ENCODE measurements at regions of chr5 and their contacts with region 1.

Region 1: GRCh38 chr5:6632917-6633468 is at the starts of genes NSUN2 and SRD5A1:
- DNase-seq: peak; percentile 97
- ATAC-seq: peak; percentile 88
- H3K4me3 Mint-ChIP-seq: peak within 1 kb of the TSS; percentile 92
- H3K27ac Mint-ChIP-seq: peak within 1 kb of the TSS; percentile 99
- H3K4me1 Mint-ChIP-seq: peaks cover 44% of the 10 kb centered on the region
- H3K27me3 Mint-ChIP-seq: no peaks in the 10 kb centered on the region
- CTCF ChIP-seq: no peak
- total RNA-seq, gene NSUN2: 86.4 and 93.3 TPM in 2 replicates
- total RNA-seq, gene SRD5A1: 11.5 and 14.8 TPM in 2 replicates

Region 2: GRCh38 chr5:5523066-5523505 is 1109.9 kb before region 1 on chr5:
- CTCF ChIA-PET with region 1: no interaction called
- POLR2A ChIA-PET with region 1: no interaction called
- intact Hi-C with region 1: loop called (anchors 1 kb)
- DNase-seq: no peak
- ATAC-seq: peak; percentile 60
- H3K4me3 Mint-ChIP-seq: peak overlapping the region; percentile 32
- H3K27ac Mint-ChIP-seq: peak overlapping the region; percentile 10
- H3K4me1 Mint-ChIP-seq: peaks cover 12% of the 10 kb centered on the region
- H3K27me3 Mint-ChIP-seq: no peaks in the 10 kb centered on the region
- CTCF ChIP-seq: no peak

Region 3: GRCh38 chr5:6480133-6481051 is 152.6 kb before region 1 on chr5:
- CTCF ChIA-PET with region 1: no interaction called
- POLR2A ChIA-PET with region 1: no interaction called
- intact Hi-C with region 1: loop called (anchors 2 kb)
- DNase-seq: no peak
- ATAC-seq: no peak
- H3K4me3 Mint-ChIP-seq: no peak overlapping the region
- H3K27ac Mint-ChIP-seq: peak overlapping the region; percentile 53
- H3K4me1 Mint-ChIP-seq: peaks cover 36% of the 10 kb centered on the region
- H3K27me3 Mint-ChIP-seq: peaks cover 2% of the 10 kb centered on the region
- CTCF ChIP-seq: no peak

Region 4: GRCh38 chr5:6576861-6577501 is 56.0 kb before region 1 on chr5:
- CTCF ChIA-PET with region 1: no interaction called
- POLR2A ChIA-PET with region 1: no interaction called
- intact Hi-C with region 1: no loop called
- DNase-seq: no peak
- ATAC-seq: peak; percentile 21
- H3K4me3 Mint-ChIP-seq: no peak overlapping the region
- H3K27ac Mint-ChIP-seq: no peak overlapping the region
- H3K4me1 Mint-ChIP-seq: no peaks in the 10 kb centered on the region
- H3K27me3 Mint-ChIP-seq: peaks cover 14% of the 10 kb centered on the region
- CTCF ChIP-seq: no peak

Region 5: GRCh38 chr5:6659941-6660684 is 27.1 kb after region 1 on chr5:
- CTCF ChIA-PET with region 1: interaction called, 3 read pairs
- POLR2A ChIA-PET with region 1: interaction called, 13 read pairs
- intact Hi-C with region 1: loop called (anchors 1 kb)
- DNase-seq: peak; percentile 35
- ATAC-seq: peak; percentile 78
- H3K4me3 Mint-ChIP-seq: peak overlapping the region; percentile 80
- H3K27ac Mint-ChIP-seq: peak overlapping the region; percentile 96
- H3K4me1 Mint-ChIP-seq: peaks cover 31% of the 10 kb centered on the region
- H3K27me3 Mint-ChIP-seq: no peaks in the 10 kb centered on the region
- CTCF ChIP-seq: no peak

Region 6: GRCh38 chr5:6722015-6722414 is 89.0 kb after region 1 on chr5:
- CTCF ChIA-PET with region 1: interaction called, 3 read pairs
- POLR2A ChIA-PET with region 1: interaction called, 13 read pairs
- intact Hi-C with region 1: no loop called
- DNase-seq: no peak
- ATAC-seq: peak; percentile 65
- H3K4me3 Mint-ChIP-seq: peak overlapping the region; percentile 83
- H3K27ac Mint-ChIP-seq: peak overlapping the region; percentile 94
- H3K4me1 Mint-ChIP-seq: peaks cover 89% of the 10 kb centered on the region
- H3K27me3 Mint-ChIP-seq: no peaks in the 10 kb centered on the region
- CTCF ChIP-seq: no peak

Region 7: GRCh38 chr5:6737023-6737941 is 104.3 kb after region 1 on chr5:
- CTCF ChIA-PET with region 1: interaction called, 5 read pairs
- POLR2A ChIA-PET with region 1: interaction called, 22 read pairs
- intact Hi-C with region 1: loop called (anchors 2 kb)
- DNase-seq: no peak
- ATAC-seq: peak; percentile 66
- H3K4me3 Mint-ChIP-seq: peak overlapping the region; percentile 60
- H3K27ac Mint-ChIP-seq: peak overlapping the region; percentile 88
- H3K4me1 Mint-ChIP-seq: peaks cover 60% of the 10 kb centered on the region
- H3K27me3 Mint-ChIP-seq: no peaks in the 10 kb centered on the region
- CTCF ChIP-seq: no peak

Region 8: GRCh38 chr5:7868773-7869473 is 1235.9 kb after region 1 on chr5 and contains the starts of genes FASTKD3 and MTRR:
- CTCF ChIA-PET with region 1: no interaction called
- POLR2A ChIA-PET with region 1: interaction called, 3 read pairs
- intact Hi-C with region 1: loop called (anchors 5 kb)
- DNase-seq: peak; percentile 80
- ATAC-seq: peak; percentile 99
- H3K4me3 Mint-ChIP-seq: peak within 1 kb of the TSS; percentile 89
- H3K27ac Mint-ChIP-seq: peak within 1 kb of the TSS; percentile 65
- H3K4me1 Mint-ChIP-seq: peaks cover 62% of the 10 kb centered on the region
- H3K27me3 Mint-ChIP-seq: no peaks in the 10 kb centered on the region
- CTCF ChIP-seq: no peak
- total RNA-seq, gene FASTKD3: 12.1 and 16.0 TPM in 2 replicates
- total RNA-seq, gene MTRR: 54.8 and 70.7 TPM in 2 replicates